Transverse colon (tissue), 4 donors: ENCODE measurements at regions of chr7 and their contacts with region 1.

Region 1: DNA sequence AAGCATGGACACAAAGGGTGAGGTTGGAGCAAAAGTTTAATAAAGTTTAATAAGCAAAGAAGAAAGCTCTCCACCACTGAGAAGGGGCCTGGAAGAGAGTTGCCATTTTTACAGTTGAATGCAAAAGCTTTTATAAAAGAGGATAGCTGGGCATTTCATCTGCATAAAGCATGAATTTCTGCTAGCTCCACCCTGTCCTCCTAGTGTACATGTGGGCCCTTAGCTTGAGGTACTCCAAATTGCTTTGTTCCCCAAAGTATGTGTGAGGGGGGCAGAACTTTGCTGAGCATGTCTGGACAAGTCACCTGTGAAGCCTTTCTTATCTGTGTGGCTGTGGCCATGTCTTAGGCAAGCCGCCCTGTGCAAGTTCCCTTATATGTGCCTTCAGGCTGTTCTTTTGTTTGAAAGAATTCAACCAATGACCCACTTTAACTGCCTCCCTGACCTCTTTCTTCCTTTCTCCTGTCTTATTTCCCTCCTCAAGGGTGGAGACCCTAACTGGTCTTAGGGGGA is 22.5 kb upstream of the CROT start:
- DNase-seq: no peak
- H3K4me3 ChIP-seq: no peak overlapping the region
- H3K27ac ChIP-seq: no peak overlapping the region
- H3K4me1 ChIP-seq: peaks cover 0 to 9% (median 7%) of the 10 kb centered on the region in 4 donors
- H3K27me3 ChIP-seq: no peaks in the 10 kb centered on the region
- CTCF ChIP-seq: no peak
- EP300 ChIP-seq: no peak
- POLR2A ChIP-seq: no peak

Region 2: GRCh38 chr7:85896531-85896930 is 1426.4 kb before region 1 on chr7:
- in situ Hi-C with region 1: no loop called
- intact Hi-C with region 1: no loop called
- DNase-seq: no peak
- H3K4me3 ChIP-seq: no peak overlapping the region
- H3K27ac ChIP-seq: no peak overlapping the region
- H3K4me1 ChIP-seq: no peaks in the 10 kb centered on the region
- H3K27me3 ChIP-seq: no peaks in the 10 kb centered on the region
- CTCF ChIP-seq: no peak
- EP300 ChIP-seq: no peak
- POLR2A ChIP-seq: no peak

Region 3: GRCh38 chr7:86916277-86916825 is 406.6 kb before region 1 on chr7:
- in situ Hi-C with region 1: no loop called
- intact Hi-C with region 1: no loop called
- DNase-seq: no peak
- H3K4me3 ChIP-seq: no peak overlapping the region
- H3K27ac ChIP-seq: no peak overlapping the region
- H3K4me1 ChIP-seq: no peaks in the 10 kb centered on the region
- H3K27me3 ChIP-seq: no peaks in the 10 kb centered on the region
- CTCF ChIP-seq: no peak
- EP300 ChIP-seq: no peak
- POLR2A ChIP-seq: no peak

Region 4: GRCh38 chr7:87608443-87608842 is 285.5 kb after region 1 on chr7:
- in situ Hi-C with region 1: no loop called
- intact Hi-C with region 1: loop called (anchors 5 kb)
- DNase-seq: no peak
- H3K4me3 ChIP-seq: no peak overlapping the region
- H3K27ac ChIP-seq: no peak overlapping the region
- H3K4me1 ChIP-seq: peaks cover 0 to 10% (median 0%) of the 10 kb centered on the region in 4 donors
- H3K27me3 ChIP-seq: peaks cover 4% of the 10 kb centered on the region
- CTCF ChIP-seq: no peak
- EP300 ChIP-seq: no peak
- POLR2A ChIP-seq: no peak